Left ventricle myocardium superior (tissue), 1 donor: ENCODE measurements at regions of chr22 and their contacts with region 1.

Region 1: DNA sequence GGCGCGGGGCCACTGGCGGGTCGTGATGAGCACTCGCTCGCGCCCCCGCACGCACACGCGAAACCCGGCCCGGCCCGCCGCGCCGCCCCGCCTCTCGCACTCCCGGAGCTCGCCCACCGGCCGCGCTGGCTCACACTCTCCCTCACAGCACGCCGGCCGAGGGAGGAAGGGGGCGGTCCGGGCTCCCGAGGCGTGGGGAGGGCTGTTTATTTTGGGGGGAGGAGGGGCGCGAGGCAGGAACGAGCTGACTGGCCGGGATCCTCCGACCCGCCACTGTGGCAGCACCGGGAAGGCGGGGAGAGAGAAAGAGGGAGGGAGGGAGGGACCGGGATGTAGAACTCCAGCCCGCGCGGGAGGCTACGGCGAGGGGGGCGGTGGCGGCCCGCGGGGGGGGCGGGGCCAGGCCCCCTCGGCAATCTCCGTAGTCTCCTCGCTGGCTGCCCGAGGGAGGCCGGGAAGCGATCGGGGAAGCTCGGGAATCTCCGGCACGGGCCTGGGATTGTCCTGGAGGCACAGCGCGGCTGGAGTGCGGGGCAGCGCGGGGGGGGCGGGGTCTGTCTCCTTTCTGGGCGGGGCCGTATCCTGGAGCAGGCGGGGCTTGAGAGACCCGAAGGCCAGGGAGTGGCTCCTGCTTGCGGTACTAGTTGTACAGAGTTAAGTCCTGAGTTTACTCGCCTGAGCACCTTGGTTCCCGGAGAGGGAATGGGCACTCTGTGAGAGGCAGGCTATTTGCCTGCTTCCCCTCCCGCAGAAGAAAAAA is at the start of gene RBFOX2:
- DNase-seq: peak; percentile 99
- ATAC-seq: peak; percentile 96
- total RNA-seq, gene RBFOX2: 76.7 TPM

Region 2: GRCh38 chr22:35846804-35847203 is 182.0 kb before region 1 on chr22:
- intact Hi-C with region 1: no loop called
- DNase-seq: no peak
- ATAC-seq: no peak

Region 3: GRCh38 chr22:35971456-35972119 is 57.2 kb before region 1 on chr22:
- intact Hi-C with region 1: loop called (anchors 10 kb)
- DNase-seq: peak; percentile 37
- ATAC-seq: peak; percentile 79

Region 4: GRCh38 chr22:36086170-36086490 is 57.3 kb after region 1 on chr22:
- intact Hi-C with region 1: no loop called
- DNase-seq: no peak
- ATAC-seq: no peak